Astrocyte of the cerebellum (primary cell): ENCODE measurements at regions of chr1 and their contacts with region 1.

Region 1: GRCh38 chr1:57986432-57986831 is 560.1 kb downstream of the OMA1 start:
- DNase-seq: no peak
- H3K4me3 ChIP-seq: no peak overlapping the region
- CTCF ChIP-seq: no peak

Region 2: GRCh38 chr1:57440096-57440495 is 546.3 kb before region 1 on chr1:
- in situ Hi-C with region 1: no loop called
- DNase-seq: no peak
- H3K4me3 ChIP-seq: no peak overlapping the region
- CTCF ChIP-seq: no peak

Region 3: DNA sequence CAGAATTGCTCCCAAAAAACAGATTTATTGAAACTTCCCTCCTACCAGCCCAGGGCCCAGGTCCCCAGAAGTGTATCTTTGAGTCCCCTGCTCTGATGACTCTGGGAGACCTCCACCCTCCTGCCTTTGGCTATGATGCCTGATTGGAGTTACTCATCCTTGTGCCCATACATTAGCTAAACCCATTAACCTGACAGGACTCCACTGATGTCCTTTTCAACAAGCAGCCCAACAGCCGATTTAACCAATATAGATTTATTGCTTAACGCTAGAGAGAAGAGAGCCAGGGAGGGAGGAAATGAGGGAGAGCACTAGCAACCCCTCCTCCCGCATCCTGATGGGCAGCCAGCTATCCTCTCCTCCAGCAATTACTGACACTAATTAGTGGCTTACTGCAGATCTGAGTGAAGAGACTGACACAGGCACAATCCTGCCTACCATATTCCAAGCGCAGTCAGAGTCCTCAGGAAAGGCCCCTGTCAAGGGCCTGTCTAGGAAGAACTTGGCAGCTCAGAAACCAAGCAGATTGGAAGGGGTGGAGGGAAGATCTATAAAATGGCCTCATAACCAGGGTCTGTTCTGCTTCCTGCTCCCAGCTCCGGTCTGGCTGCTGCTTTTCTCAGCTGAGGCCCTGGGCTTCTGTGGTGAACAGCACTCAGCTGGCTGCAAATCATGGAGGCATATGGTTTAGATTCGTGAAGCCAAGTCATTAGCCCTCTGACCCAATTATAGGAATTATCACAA is 78.1 kb before region 1 on chr1:
- in situ Hi-C with region 1: no loop called
- DNase-seq: no peak
- H3K4me3 ChIP-seq: no peak overlapping the region
- CTCF ChIP-seq: no peak

Region 4: DNA sequence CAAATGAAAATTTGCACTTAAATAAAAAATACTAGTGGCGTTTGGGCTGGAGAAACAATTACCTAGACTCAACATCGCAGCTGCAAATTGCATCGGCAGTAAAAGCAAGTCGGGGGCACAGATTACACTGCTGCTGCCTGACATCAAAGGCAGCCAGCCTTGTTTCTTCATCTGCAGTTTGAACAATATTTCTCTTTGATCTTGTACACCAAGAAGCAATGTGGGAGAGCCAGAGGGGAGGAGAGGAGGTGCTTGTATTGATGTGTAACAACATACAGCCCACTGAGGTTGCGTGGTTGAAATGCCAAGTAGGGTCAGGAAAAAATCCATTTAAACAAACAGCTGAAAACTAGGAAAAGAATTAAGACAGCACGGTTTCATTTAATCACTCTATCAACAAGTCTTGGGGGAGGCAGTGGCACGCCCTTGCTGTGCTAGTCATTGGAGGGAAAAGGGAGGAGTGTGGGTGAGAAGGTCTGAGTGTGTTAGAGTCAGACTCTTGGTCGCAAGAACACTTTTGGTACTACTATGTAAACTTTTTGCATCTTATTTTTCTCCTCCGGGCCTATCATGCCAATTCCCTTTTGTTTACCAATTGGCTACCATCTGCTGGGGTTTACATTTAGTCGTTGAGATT is 103.6 kb after region 1 on chr1:
- in situ Hi-C with region 1: loop called (anchors 25 kb)
- DNase-seq: no peak
- H3K4me3 ChIP-seq: no peak overlapping the region
- CTCF ChIP-seq: no peak